HCT116 (cell line): ENCODE measurements at regions of chr1 and their contacts with region 1.

Region 1: DNA sequence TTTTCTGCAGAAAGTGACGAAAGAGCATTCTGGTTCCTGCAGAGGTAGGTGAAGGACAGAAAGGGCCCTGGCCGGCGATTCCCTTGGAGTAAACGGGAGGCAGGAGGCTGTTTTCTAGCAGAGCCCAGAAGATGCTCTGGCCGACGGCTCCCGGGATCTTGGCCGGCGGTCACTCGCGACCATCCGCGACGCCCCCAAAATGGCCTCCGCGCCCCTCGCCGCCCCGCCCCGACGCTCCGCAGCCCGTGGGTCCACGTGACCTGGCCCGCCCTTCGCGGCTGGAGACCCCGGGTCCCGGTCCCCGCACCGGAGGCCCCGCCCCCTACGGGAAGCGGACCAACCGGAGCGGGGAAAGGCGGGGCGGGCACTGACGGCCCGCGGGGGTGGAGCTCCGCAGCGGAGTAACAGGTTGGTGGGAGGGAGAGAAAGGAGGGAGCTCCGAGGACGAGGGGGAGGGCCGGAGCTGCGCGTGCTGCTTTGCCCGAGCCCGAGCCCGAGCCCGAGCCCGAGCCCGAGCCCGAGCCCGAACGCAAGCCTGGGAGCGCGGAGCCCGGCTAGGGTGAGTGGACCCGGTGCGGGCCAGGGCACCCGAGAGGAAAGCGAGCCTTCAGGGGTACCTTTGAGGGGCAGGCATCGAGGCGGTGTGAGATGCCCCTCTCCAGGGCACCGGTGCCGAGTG is at the start of gene CGN:
- DNase-seq: no peak
- ATAC-seq: peak; percentile 80
- H3K4me3 ChIP-seq: peak within 1 kb of the TSS; percentile 68 to 72
- H3K27ac ChIP-seq: peak within 1 kb of the TSS; percentile 84
- H3K4me1 ChIP-seq: peaks cover 60 to 75% of the 10 kb centered on the region in 2 experiments
- H3K27me3 ChIP-seq: no peaks in the 10 kb centered on the region
- CTCF ChIP-seq: no peak
- POLR2A ChIP-seq: no peak
- RAD21 ChIP-seq: no peak
- total RNA-seq, gene CGN: 19.7 TPM

Region 2: DNA sequence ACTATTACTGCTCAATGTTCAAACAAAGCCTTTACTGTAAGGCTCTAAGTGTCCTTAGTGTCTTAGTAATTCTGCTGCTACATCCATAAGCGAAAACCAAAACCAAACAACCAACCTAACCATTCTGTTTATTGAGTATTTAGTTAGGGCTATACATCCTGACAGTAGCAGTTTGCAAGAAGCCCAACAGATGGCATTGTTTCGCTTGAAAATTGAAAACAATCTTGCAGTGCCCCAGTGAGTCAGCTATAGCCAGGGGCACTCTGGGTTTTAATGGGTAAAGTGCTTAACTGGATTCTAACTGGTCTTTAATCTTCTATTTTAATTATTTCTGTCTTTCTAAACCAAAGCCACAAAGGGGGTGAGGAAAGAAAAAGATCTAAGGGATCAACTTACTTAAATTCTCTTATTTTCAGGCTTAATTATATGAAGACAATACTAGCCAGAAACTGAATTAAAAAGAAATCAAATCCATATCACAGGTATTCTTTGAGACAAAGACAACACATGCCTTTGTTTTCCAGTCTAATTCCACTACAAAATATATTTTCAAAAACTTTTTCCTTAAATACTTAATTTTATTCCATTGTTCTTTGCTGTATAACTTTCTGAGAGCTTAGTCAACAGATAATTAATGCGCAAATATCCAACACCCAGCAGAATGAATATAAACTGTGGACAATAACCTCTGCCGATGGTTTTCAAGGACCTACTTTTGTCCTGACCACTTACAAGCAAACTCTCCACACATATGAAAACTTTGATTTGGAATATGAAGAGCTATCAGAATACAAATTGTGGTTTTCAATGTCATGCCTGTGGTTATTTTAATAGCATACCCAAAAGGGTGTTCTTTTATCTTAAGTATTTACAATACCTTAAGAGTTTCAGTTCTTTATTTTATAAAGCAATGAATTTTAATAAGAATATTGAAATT is 67.0 kb before region 1 on chr1:
- CTCF ChIA-PET with region 1: interaction called, 4 read pairs
- POLR2A ChIA-PET with region 1: no interaction called
- RAD21 ChIA-PET with region 1: no interaction called
- intact Hi-C with region 1: loop called (anchors 5 kb)
- DNase-seq: peak; percentile 76
- ATAC-seq: peak; percentile 99
- H3K4me3 ChIP-seq: no peak overlapping the region
- H3K27ac ChIP-seq: peak overlapping the region; percentile 16; the same call in 1 of the 2 replicates
- H3K4me1 ChIP-seq: peaks cover 11 to 13% of the 10 kb centered on the region in 2 experiments
- H3K27me3 ChIP-seq: no peaks in the 10 kb centered on the region
- CTCF ChIP-seq: peak; percentile 79 to 84 (median 83); a peak in 5 of 6 replicates
- POLR2A ChIP-seq: no peak
- RAD21 ChIP-seq: peak; percentile 89

Region 3: GRCh38 chr1:151459331-151460046 is 51.6 kb before region 1 on chr1 and contains the start of gene POGZ:
- CTCF ChIA-PET with region 1: no interaction called
- POLR2A ChIA-PET with region 1: no interaction called
- RAD21 ChIA-PET with region 1: interaction called in 1 of 2 experiments, 3 read pairs
- intact Hi-C with region 1: loop called (anchors 2 kb)
- DNase-seq: peak; percentile 94
- ATAC-seq: peak; percentile 88
- H3K4me3 ChIP-seq: peak within 1 kb of the TSS; percentile 62 to 89
- H3K27ac ChIP-seq: peak within 1 kb of the TSS; percentile 73
- H3K4me1 ChIP-seq: peaks cover 10 to 19% of the 10 kb centered on the region in 2 experiments; a peak in 3 of 4 replicates
- H3K27me3 ChIP-seq: no peaks in the 10 kb centered on the region
- CTCF ChIP-seq: no peak
- POLR2A ChIP-seq: peak; percentile 12
- RAD21 ChIP-seq: no peak
- total RNA-seq, gene POGZ: 80.6 TPM

Region 4: DNA sequence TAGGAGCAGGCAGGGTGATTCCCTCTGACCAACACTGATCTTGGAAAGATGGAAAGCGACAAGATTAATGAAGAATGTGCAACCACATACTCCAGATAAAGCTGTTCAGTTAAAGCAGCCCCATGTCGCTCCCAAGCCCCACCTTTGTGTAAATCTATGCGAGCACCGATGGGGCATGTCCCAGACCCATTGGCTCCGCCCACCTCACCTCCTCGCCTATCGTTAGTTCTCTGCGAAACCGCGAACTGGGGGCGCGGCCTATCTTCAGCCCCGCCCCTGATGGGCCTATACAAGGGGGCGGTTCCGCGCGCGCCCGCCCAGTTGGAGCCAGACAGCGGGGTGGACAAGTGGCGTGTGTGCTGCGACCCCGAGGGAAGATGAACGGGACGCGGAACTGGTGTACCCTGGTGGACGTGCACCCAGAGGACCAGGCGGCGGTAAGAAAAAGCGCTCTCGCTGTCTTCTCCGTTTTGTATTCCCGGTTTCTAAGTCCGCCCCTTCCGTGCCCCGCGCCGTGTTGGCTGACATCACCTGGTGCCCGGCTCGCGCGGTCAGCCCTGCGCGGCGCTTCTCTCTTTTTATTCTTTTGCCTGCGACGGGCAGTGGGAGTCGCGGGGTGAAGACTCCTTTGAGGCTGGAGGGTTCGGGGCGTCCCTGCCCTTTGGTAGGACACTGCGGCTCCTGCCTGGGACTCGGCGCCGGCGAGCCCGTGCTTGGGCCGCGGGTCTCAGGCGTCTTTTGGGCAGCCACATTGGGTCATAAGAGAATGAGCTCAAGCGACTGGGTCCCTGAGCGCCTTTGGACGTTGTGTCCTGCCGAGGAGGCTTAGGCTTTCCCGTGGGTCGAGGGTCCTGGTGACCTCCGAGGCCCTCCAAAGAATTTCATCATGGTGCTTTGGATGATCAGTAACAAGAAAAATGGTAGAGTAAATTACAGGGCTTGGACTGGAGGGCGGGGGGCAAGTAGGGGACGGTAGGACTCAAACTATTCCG is 29.2 kb after region 1 on chr1 and contains the start of gene TUFT1:
- CTCF ChIA-PET with region 1: interaction called, 4 read pairs
- POLR2A ChIA-PET with region 1: interaction called, 10 read pairs
- RAD21 ChIA-PET with region 1: no interaction called
- intact Hi-C with region 1: no loop called
- DNase-seq: peak; percentile 85
- ATAC-seq: peak; percentile 93
- H3K4me3 ChIP-seq: peak within 1 kb of the TSS; percentile 76
- H3K27ac ChIP-seq: peak within 1 kb of the TSS; percentile 58
- H3K4me1 ChIP-seq: peaks cover 15 to 42% of the 10 kb centered on the region in 2 experiments
- H3K27me3 ChIP-seq: no peaks in the 10 kb centered on the region
- CTCF ChIP-seq: no peak
- POLR2A ChIP-seq: peak; percentile 95
- RAD21 ChIP-seq: no peak
- total RNA-seq, gene TUFT1: 12.3 TPM

Region 5: GRCh38 chr1:151661751-151662150 is 150.7 kb after region 1 on chr1:
- CTCF ChIA-PET with region 1: no interaction called
- POLR2A ChIA-PET with region 1: no interaction called
- RAD21 ChIA-PET with region 1: no interaction called
- intact Hi-C with region 1: no loop called
- DNase-seq: no peak
- ATAC-seq: no peak
- H3K4me3 ChIP-seq: no peak overlapping the region
- H3K27ac ChIP-seq: no peak overlapping the region
- H3K4me1 ChIP-seq: no peaks in the 10 kb centered on the region
- H3K27me3 ChIP-seq: no peaks in the 10 kb centered on the region
- CTCF ChIP-seq: no peak
- POLR2A ChIP-seq: no peak
- RAD21 ChIP-seq: no peak

Region 6: GRCh38 chr1:151739590-151740375 is 228.7 kb after region 1 on chr1:
- CTCF ChIA-PET with region 1: no interaction called
- POLR2A ChIA-PET with region 1: no interaction called
- RAD21 ChIA-PET with region 1: no interaction called
- intact Hi-C with region 1: no loop called
- DNase-seq: no peak
- ATAC-seq: no peak; the same call in 1 of the 2 replicates
- H3K4me3 ChIP-seq: no peak overlapping the region
- H3K27ac ChIP-seq: no peak overlapping the region
- H3K4me1 ChIP-seq: peaks cover 6 to 10% of the 10 kb centered on the region in 2 experiments; a peak in 2 of 4 replicates
- H3K27me3 ChIP-seq: no peaks in the 10 kb centered on the region
- CTCF ChIP-seq: no peak
- POLR2A ChIP-seq: no peak
- RAD21 ChIP-seq: peak; percentile 23; the same call in 1 of the 2 replicates